ENCODE measurements at regions of chr9 and their contacts with region 1.

Region 1: DNA sequence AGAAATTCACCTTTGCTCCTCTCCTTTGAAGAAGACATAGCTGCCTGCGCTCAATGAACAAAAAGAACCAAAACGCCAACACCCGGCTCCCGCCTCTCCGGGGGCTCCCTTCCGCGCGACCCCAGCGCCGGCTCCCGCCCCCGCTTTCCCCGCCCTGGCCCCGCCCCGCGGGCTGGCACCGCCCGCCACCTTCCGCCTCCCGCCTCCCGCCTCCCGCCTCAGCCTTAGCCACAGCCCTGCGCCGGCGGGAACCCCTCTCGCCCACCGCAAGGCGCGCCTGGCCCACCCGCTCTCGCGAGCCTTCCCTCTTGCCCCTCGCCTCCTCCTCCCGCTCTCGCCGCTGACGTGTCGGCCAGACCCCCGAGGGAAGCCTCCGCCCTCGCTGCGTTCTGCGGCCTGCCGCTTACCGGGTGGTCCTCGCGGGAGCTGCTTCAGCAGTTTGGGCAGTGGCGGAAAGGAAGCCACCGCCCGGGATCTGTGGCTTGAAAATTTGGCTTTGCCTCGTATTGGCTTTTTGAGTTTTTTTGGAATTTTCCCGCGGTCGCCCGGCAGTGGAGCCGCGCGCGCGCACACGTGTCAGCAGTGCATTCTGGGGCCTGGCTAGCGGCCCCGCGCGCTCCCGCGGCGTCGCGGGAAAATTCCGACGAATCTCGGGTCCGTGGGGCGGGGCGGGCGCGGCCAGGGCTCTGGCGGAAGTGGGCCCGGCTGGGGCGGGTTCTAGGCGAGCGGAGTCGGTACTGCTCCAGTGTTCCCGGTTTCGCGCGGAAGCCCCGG is at the start of gene FANCC:
- DNase-seq: peak; percentile 81
- ATAC-seq: peak; percentile 68
- H3K4me3 ChIP-seq: peak within 1 kb of the TSS; percentile 94
- H3K27ac ChIP-seq: peak within 1 kb of the TSS; percentile 97
- H3K4me1 ChIP-seq: peaks cover 28% of the 10 kb centered on the region
- H3K27me3 ChIP-seq: no peaks in the 10 kb centered on the region
- CTCF ChIP-seq: no peak
- total RNA-seq, gene FANCC: 6.0 and 6.9 TPM in 2 replicates

Region 2: GRCh38 chr9:95225076-95225725 is 92.1 kb before region 1 on chr9:
- CTCF ChIA-PET with region 1: no interaction called
- POLR2A ChIA-PET with region 1: no interaction called
- intact Hi-C with region 1: no loop called
- DNase-seq: no peak
- ATAC-seq: no peak
- H3K4me3 ChIP-seq: no peak overlapping the region
- H3K27ac ChIP-seq: no peak overlapping the region
- H3K4me1 ChIP-seq: no peaks in the 10 kb centered on the region
- H3K27me3 ChIP-seq: no peaks in the 10 kb centered on the region
- CTCF ChIP-seq: no peak

Region 3: GRCh38 chr9:95383185-95383673 is 65.9 kb after region 1 on chr9:
- CTCF ChIA-PET with region 1: no interaction called
- POLR2A ChIA-PET with region 1: no interaction called
- intact Hi-C with region 1: loop called (anchors 5 kb)
- DNase-seq: peak; percentile 84
- ATAC-seq: peak; percentile 74
- H3K4me3 ChIP-seq: peak overlapping the region; percentile 33; the same call in 1 of the 2 replicates
- H3K27ac ChIP-seq: peak overlapping the region; percentile 68
- H3K4me1 ChIP-seq: peaks cover 32% of the 10 kb centered on the region
- H3K27me3 ChIP-seq: no peaks in the 10 kb centered on the region
- CTCF ChIP-seq: no peak

Region 4: DNA sequence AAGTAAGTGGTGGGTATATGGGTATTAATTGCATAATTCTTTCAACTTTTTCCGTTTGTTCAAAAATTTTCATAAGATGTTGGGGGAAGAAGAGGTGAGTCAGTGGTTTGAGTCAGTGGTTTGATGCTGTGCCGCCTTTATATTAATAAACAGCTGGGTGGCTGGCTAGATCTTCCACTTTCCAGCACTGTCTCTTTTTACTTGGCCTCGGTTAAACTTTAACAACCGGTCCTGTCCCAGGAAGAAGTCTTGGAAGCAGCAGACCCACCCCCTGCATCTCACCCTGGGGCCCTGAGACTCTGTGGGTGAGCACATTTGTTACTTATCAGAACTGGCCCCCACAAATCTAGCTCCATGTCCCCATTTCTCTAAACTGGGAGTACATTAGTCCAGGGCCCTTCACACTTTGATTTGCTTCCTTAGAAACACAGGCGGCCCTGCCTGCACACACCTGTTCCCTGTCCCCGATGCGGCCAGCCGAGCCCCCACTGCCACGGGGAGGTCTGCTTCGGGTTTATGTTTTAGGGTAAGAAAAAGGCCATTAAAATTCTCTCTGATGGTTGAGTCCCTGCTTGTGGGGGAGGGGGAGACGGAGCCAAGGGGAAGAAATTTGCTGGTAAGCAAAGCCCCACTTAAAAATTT is 108.7 kb after region 1 on chr9:
- CTCF ChIA-PET with region 1: no interaction called
- POLR2A ChIA-PET with region 1: no interaction called
- intact Hi-C with region 1: loop called (anchors 2 kb)
- DNase-seq: peak; percentile 55
- ATAC-seq: peak; percentile 57
- H3K4me3 ChIP-seq: peak overlapping the region; percentile 88
- H3K27ac ChIP-seq: peak overlapping the region; percentile 76
- H3K4me1 ChIP-seq: peaks cover 4% of the 10 kb centered on the region
- H3K27me3 ChIP-seq: no peaks in the 10 kb centered on the region
- CTCF ChIP-seq: no peak

Measured in PC-3 (cell line).